A549 (cell line): ENCODE measurements at regions of chr16 and their contacts with region 1.

Region 1: DNA sequence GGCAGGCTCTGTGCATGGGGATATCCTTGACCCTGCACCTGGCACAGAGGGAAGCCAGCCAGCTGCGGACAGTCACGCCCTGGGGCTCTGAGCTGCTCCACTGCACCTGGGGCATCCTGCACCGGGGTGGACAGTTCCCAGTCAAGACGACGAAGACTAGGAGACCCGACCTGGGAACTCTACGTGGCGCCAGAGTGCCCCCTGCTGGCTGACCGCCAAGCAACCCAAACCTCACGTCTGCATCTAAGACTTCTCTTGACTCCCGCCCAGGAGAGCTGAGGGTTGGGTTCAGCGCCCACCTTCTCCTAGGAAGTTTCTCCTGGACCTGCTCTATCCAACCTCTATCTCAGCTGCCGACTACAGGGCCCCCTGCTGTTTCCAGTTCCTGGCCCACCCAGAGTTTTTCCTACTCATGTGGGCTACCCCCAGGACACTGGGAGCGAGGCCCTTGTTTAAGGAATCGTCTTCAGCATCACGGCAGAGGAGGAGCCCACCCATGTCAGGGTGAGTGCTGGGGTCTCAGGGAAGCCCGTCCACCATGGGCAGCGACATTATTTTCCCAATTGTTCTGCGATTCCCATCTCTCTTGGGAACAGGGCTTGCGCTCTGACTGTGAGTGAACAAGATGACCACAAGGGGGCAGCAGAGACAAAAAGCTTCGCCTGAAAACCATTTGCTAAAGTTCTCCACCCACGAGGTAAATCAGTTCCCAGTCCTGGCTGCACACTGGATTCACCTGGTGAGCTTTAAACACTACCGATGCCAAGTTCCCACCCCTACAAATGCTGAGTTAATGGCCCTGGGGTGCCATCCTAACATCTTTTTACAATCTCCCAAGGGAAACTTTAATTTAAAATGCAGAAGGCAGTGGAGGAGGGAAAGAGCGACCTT is 29.3 kb downstream of the TLE7 start:
- DNase-seq: peak; percentile 70 to 89
- ATAC-seq: peak; percentile 86 to 94
- H3K4me3 ChIP-seq: no peak overlapping the region
- H3K27ac ChIP-seq: no peak overlapping the region
- H3K4me1 ChIP-seq: 0 out of 3 replicates have a peak, but pooled peaks cover 3% of the 10 kb centered on the region
- CTCF ChIP-seq: peak; percentile 83
- EP300 ChIP-seq: no peak
- POLR2A ChIP-seq: no peak
- RAD21 ChIP-seq: peak; percentile 74 to 79

Region 2: GRCh38 chr16:71402007-71402406 is 10.5 kb before region 1 on chr16:
- CTCF ChIA-PET with region 1: interaction called, 27 read pairs
- POLR2A ChIA-PET with region 1: no interaction called
- DNase-seq: no peak
- ATAC-seq: no peak
- H3K4me3 ChIP-seq: no peak overlapping the region
- H3K27ac ChIP-seq: no peak overlapping the region
- H3K4me1 ChIP-seq: no peaks in the 10 kb centered on the region
- CTCF ChIP-seq: no peak
- EP300 ChIP-seq: no peak
- POLR2A ChIP-seq: no peak
- RAD21 ChIP-seq: no peak

Region 3: GRCh38 chr16:71431941-71432340 is 19.4 kb after region 1 on chr16:
- CTCF ChIA-PET with region 1: interaction called, 18 read pairs
- POLR2A ChIA-PET with region 1: no interaction called
- DNase-seq: no peak
- ATAC-seq: no peak
- H3K4me3 ChIP-seq: no peak overlapping the region
- H3K27ac ChIP-seq: no peak overlapping the region
- H3K4me1 ChIP-seq: peaks cover 5% of the 10 kb centered on the region; the same call in 1 of the 3 replicates
- CTCF ChIP-seq: no peak
- EP300 ChIP-seq: no peak
- POLR2A ChIP-seq: no peak
- RAD21 ChIP-seq: no peak

Region 4: GRCh38 chr16:71484006-71484893 is 71.7 kb after region 1 on chr16:
- CTCF ChIA-PET with region 1: interaction called, 13 read pairs
- POLR2A ChIA-PET with region 1: no interaction called
- DNase-seq: peak; percentile 84 to 95
- ATAC-seq: peak; percentile 97 to 98
- H3K4me3 ChIP-seq: peak overlapping the region; percentile 68
- H3K27ac ChIP-seq: peak overlapping the region; percentile 83 to 92
- H3K4me1 ChIP-seq: peaks cover 3% of the 10 kb centered on the region; the same call in 1 of the 3 replicates
- CTCF ChIP-seq: no peak
- EP300 ChIP-seq: no peak
- POLR2A ChIP-seq: peak; percentile 52
- RAD21 ChIP-seq: no peak

Region 5: GRCh38 chr16:71499775-71500364 is 87.4 kb after region 1 on chr16:
- CTCF ChIA-PET with region 1: interaction called, 118 read pairs
- POLR2A ChIA-PET with region 1: interaction called, 3 read pairs
- DNase-seq: peak; percentile 65 to 67
- ATAC-seq: peak; percentile 75 to 90
- H3K4me3 ChIP-seq: no peak overlapping the region
- H3K27ac ChIP-seq: no peak overlapping the region
- H3K4me1 ChIP-seq: 0 out of 3 replicates have a peak, but pooled peaks cover under 1% of the 10 kb centered on the region
- CTCF ChIP-seq: peak; percentile 84
- EP300 ChIP-seq: no peak
- POLR2A ChIP-seq: no peak
- RAD21 ChIP-seq: peak; percentile 82 to 88

Region 6: DNA sequence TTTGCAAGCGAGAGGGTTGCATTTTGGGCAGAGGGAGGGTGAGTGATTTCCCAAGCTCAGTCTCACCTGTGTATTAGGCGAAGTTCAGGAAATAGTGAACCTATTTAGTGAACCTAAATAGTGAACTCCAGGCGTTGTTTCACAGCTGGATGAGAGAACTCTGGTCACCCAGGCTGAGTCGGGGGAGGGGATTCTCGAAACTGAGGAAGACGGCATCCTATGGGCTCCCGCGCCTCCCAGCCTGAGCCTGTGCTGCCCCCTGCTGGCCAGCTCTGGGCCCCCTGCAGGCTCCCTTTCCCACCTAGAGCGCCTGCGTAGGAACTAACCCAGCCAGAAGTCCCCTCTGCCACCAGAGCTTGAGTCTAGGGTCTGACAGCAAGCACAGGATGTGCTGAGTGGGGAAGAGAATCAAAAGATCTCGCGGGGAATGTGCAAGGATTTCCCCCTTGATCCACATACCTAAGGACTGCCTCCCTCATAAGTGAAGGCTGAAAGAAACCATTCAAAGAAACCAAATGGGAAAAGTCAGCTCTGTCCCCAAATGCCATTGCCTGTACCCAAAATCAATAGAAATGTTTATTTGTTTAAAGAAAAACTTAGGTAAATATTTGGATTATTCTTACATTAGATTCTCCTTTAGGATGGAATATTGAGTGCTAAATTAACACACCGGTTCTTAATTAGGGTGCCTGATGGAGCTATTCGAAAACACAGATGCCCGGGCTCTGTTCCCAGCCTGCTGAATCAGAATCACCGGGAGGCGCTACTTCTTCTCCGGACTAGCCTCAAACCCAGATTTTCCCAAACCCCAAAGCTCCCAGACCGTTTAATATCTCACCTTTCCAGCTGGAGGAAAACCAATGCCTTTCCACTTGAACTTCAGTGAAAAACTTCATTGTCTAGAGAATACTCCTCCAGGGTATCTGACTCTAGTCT is 198.7 kb after region 1 on chr16:
- CTCF ChIA-PET with region 1: interaction called, 72 read pairs
- POLR2A ChIA-PET with region 1: interaction called, 4 read pairs
- DNase-seq: peak; percentile 76 to 84
- ATAC-seq: peak; percentile 97
- H3K4me3 ChIP-seq: peak overlapping the region; percentile 3; the same call in 1 of the 3 replicates
- H3K27ac ChIP-seq: no peak overlapping the region; a peak in 1 of 6 replicates
- H3K4me1 ChIP-seq: peaks cover 9% of the 10 kb centered on the region; the same call in 2 of the 3 replicates
- CTCF ChIP-seq: peak; percentile 94
- EP300 ChIP-seq: no peak
- POLR2A ChIP-seq: no peak
- RAD21 ChIP-seq: peak; percentile 91 to 95